ENCODE measurements at regions of chr2 and their contacts with region 1.

Region 1: GRCh38 chr2:237085248-237086221 is at the start of gene COPS8:
- DNase-seq: peak; percentile 80 to 94 (median 90)
- ATAC-seq: peak; percentile 98
- H3K4me3 ChIP-seq: peak within 1 kb of the TSS; percentile 78 to 80
- H3K4me3 Mint-ChIP-seq: peak within 1 kb of the TSS; percentile 100
- H3K27ac ChIP-seq: peak within 1 kb of the TSS; percentile 88 to 91
- H3K27ac Mint-ChIP-seq: peak within 1 kb of the TSS; percentile 100
- H3K4me1 ChIP-seq: peaks cover 23% of the 10 kb centered on the region
- H3K4me1 Mint-ChIP-seq: peaks cover 39% of the 10 kb centered on the region
- H3K27me3 ChIP-seq: no peaks in the 10 kb centered on the region
- H3K27me3 Mint-ChIP-seq: no peaks in the 10 kb centered on the region
- CTCF ChIP-seq: peak; percentile 40
- total RNA-seq, gene COPS8: 53.2 to 56.3 TPM

Region 2: GRCh38 chr2:236794174-236794957 is 291.2 kb before region 1 on chr2:
- CTCF ChIA-PET with region 1: no interaction called
- POLR2A ChIA-PET with region 1: no interaction called
- intact Hi-C with region 1: no loop called
- DNase-seq: no peak
- ATAC-seq: no peak
- H3K4me3 ChIP-seq: no peak overlapping the region
- H3K4me3 Mint-ChIP-seq: no peak overlapping the region
- H3K27ac ChIP-seq: no peak overlapping the region
- H3K27ac Mint-ChIP-seq: no peak overlapping the region
- H3K4me1 ChIP-seq: no peaks in the 10 kb centered on the region
- H3K4me1 Mint-ChIP-seq: no peaks in the 10 kb centered on the region
- H3K27me3 ChIP-seq: no peaks in the 10 kb centered on the region
- H3K27me3 Mint-ChIP-seq: peaks cover 7% of the 10 kb centered on the region
- CTCF ChIP-seq: no peak

Region 3: DNA sequence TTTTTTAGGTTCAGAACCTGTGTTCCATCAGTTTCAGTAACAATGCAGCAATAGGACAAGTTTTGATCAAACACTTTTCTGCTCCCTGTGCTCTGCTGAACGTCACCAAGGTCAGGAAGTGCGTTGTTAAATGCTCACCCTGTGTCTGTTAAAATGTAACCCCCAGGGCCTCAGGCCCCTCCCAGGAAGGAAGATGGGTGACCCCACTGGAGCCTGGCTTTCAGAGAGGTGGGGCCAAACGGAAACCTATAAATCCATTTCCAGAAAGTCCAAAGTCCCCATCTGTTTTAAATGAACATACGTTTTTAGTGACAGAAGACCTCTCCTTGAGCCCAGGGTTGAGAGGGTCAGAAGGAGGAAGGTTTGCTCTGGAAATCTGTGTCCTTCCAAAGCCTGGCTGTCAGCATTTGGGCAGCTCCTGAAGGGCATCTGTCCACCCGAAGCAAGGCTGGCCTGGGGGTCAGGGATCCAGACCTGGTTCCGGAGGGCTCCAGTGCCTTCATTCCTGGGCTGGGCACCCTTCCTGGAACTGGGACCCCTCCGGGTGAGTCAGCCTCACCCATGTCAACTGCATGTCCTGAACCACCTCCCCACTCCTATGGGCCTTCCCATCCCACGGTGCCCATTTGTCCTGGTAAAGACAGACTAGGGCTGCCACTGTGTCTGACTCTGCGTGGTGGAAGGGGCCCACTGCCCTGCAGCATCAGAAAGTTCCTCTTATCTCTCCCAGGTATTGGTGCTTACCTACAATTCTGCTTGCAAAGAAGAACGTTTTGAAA is 117.2 kb before region 1 on chr2:
- CTCF ChIA-PET with region 1: no interaction called
- POLR2A ChIA-PET with region 1: interaction called, 7 read pairs
- intact Hi-C with region 1: loop called in 1 of 2 experiments (anchors 5 kb)
- DNase-seq: peak in 8 of 9 experiments; percentile 40 to 88 (median 56)
- ATAC-seq: peak; percentile 92
- H3K4me3 ChIP-seq: peak overlapping the region in 1 of 2 experiments; percentile 34
- H3K4me3 Mint-ChIP-seq: peak overlapping the region; percentile 69
- H3K27ac ChIP-seq: peak overlapping the region; percentile 52 to 72
- H3K27ac Mint-ChIP-seq: peak overlapping the region; percentile 95
- H3K4me1 ChIP-seq: peaks cover 37% of the 10 kb centered on the region
- H3K4me1 Mint-ChIP-seq: peaks cover 48% of the 10 kb centered on the region
- H3K27me3 ChIP-seq: no peaks in the 10 kb centered on the region
- H3K27me3 Mint-ChIP-seq: no peaks in the 10 kb centered on the region
- CTCF ChIP-seq: no peak

Region 4: DNA sequence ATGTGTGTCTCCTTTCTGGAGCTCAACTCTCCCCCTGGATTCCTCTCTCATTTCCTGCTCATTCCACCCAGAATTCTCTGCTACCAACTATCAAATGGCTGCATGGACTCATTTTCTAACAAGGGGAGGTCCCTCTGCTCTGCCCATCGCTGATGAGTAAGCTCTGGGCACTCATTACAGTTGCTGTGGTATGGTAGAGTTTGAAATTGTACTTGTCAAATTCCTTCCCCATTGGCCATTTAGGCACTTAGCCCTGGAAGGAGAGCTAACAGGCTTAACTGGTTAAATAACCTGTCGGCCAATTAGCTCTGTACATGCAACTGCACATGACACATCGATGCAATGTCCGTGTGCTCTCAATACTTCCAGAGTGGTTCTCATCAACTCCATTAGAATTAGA is 308.0 kb after region 1 on chr2:
- CTCF ChIA-PET with region 1: no interaction called
- POLR2A ChIA-PET with region 1: no interaction called
- intact Hi-C with region 1: no loop called
- DNase-seq: no peak
- ATAC-seq: no peak
- H3K4me3 ChIP-seq: no peak overlapping the region
- H3K4me3 Mint-ChIP-seq: no peak overlapping the region
- H3K27ac ChIP-seq: no peak overlapping the region
- H3K27ac Mint-ChIP-seq: no peak overlapping the region
- H3K4me1 ChIP-seq: no peaks in the 10 kb centered on the region
- H3K4me1 Mint-ChIP-seq: no peaks in the 10 kb centered on the region
- H3K27me3 ChIP-seq: no peaks in the 10 kb centered on the region
- H3K27me3 Mint-ChIP-seq: no peaks in the 10 kb centered on the region
- CTCF ChIP-seq: no peak

Region 5: GRCh38 chr2:237434866-237435311 is 349.4 kb after region 1 on chr2:
- CTCF ChIA-PET with region 1: no interaction called
- POLR2A ChIA-PET with region 1: no interaction called
- intact Hi-C with region 1: loop called in 1 of 2 experiments (anchors 10 kb)
- DNase-seq: peak; percentile 26 to 87 (median 78)
- ATAC-seq: peak; percentile 54
- H3K4me3 ChIP-seq: peak overlapping the region; percentile 22 to 56
- H3K4me3 Mint-ChIP-seq: peak overlapping the region; percentile 79
- H3K27ac ChIP-seq: peak overlapping the region; percentile 0 to 44
- H3K27ac Mint-ChIP-seq: peak overlapping the region; percentile 96
- H3K4me1 ChIP-seq: peaks cover 90% of the 10 kb centered on the region
- H3K4me1 Mint-ChIP-seq: peaks cover 86% of the 10 kb centered on the region
- H3K27me3 ChIP-seq: no peaks in the 10 kb centered on the region
- H3K27me3 Mint-ChIP-seq: no peaks in the 10 kb centered on the region
- CTCF ChIP-seq: no peak

Region 6: DNA sequence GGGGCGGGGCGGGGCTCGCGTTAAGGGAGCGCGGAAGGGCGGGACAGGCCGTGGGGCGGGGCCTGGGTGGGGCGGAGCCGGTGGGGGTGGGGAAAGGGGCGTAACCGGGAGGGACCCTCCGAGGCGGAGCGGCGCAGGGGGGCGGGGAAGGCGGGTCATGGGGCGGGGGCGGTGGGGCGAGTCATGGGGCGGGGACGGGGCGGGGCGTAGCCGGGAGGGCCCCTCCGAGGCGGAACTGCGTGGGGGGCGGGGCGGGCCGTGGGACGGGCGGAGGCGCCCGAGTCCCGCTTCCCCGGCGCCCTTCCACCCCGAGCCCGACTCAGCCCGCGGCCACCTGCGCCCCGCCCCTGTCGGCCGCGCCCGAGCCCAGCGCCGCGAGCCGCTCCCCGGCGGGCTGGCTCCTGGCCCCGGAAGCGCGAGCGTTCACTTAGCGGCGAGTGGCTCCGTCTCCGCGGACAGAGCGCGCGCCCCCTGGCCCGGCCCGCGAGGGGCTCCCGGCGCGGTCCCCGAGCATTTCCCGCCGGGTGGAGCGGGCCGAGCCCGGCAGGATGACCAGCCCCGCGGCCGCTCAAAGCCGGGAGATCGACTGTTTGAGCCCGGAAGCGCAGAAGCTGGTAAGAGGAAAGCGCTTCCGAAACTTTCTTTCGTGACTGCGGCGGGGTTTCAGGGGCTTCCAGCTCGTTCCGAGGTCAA is 606.5 kb after region 1 on chr2:
- CTCF ChIA-PET with region 1: no interaction called
- POLR2A ChIA-PET with region 1: no interaction called
- intact Hi-C with region 1: loop called in 1 of 2 experiments (anchors 10 kb)
- DNase-seq: peak; percentile 91 to 97 (median 95)
- ATAC-seq: peak; percentile 58
- H3K4me3 ChIP-seq: peak overlapping the region; percentile 80 to 85
- H3K4me3 Mint-ChIP-seq: peak overlapping the region; percentile 81
- H3K27ac ChIP-seq: peak overlapping the region; percentile 81 to 90
- H3K27ac Mint-ChIP-seq: peak overlapping the region; percentile 89
- H3K4me1 ChIP-seq: peaks cover 75% of the 10 kb centered on the region
- H3K4me1 Mint-ChIP-seq: peaks cover 75% of the 10 kb centered on the region
- H3K27me3 ChIP-seq: no peaks in the 10 kb centered on the region
- H3K27me3 Mint-ChIP-seq: no peaks in the 10 kb centered on the region
- CTCF ChIP-seq: no peak